Common myeloid progenitor, CD34-positive (primary cell): ENCODE measurements at regions of chr3 and their contacts with region 1.

Region 1: DNA sequence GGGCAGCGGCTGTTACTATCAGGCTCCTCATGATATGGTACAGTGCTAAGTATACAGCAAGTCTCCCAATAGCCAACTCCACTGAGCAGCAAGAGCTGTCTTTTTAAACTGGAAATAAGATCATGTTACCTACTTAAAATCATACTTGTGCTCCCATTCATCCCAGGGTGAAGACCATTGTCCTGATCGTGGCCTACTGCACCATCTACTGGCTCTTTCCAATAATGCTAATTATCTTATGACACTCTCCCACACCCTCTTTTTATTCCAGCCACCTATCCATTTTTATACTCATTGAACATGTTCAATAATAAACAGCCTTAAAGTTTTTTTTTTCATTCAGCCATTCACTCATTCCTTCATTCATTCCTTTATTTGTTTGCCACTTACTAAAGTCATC is 117.7 kb downstream of the GBE1 start:
- DNase-seq: peak; percentile 46 to 72 (median 66)
- H3K4me3 ChIP-seq: no peak overlapping the region
- H3K27ac ChIP-seq: no peak overlapping the region
- H3K4me1 ChIP-seq: no peaks in the 10 kb centered on the region
- H3K27me3 ChIP-seq: no peaks in the 10 kb centered on the region

Region 2: DNA sequence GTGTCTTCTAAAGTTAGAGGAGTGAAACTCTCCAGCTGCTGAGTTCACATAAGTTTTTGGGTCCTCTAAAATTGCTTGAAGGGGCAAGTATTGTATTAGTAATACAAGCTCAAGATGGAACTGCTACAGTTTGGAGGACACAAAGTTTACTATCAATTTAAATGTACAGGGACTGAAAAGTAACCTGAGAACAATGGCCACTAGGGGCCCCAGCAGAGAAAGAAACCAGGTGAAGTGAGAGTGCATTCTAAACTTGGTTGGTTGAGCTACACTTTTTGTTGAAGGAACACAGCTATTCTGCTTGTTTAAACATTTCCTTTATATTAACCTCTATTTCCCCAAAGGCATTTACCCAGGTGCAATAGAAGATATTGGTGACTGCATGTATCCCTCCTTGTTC is 637.7 kb before region 1 on chr3:
- CTCF ChIA-PET with region 1: no interaction called
- POLR2A ChIA-PET with region 1: no interaction called
- DNase-seq: no peak
- H3K4me3 ChIP-seq: no peak overlapping the region
- H3K27ac ChIP-seq: no peak overlapping the region
- H3K4me1 ChIP-seq: no peaks in the 10 kb centered on the region
- H3K27me3 ChIP-seq: no peaks in the 10 kb centered on the region

Region 3: GRCh38 chr3:81419228-81419627 is 224.5 kb before region 1 on chr3:
- CTCF ChIA-PET with region 1: interaction called, 21 read pairs
- POLR2A ChIA-PET with region 1: no interaction called
- DNase-seq: peak; percentile 8 to 32 (median 23)
- H3K4me3 ChIP-seq: no peak overlapping the region
- H3K27ac ChIP-seq: no peak overlapping the region
- H3K4me1 ChIP-seq: no peaks in the 10 kb centered on the region
- H3K27me3 ChIP-seq: no peaks in the 10 kb centered on the region

Region 4: GRCh38 chr3:81490541-81491288 is 153.0 kb before region 1 on chr3:
- CTCF ChIA-PET with region 1: interaction called, 36 read pairs
- POLR2A ChIA-PET with region 1: no interaction called
- DNase-seq: peak; percentile 87 to 93 (median 89)
- H3K4me3 ChIP-seq: no peak overlapping the region
- H3K27ac ChIP-seq: no peak overlapping the region
- H3K4me1 ChIP-seq: peaks cover 0 to 2% (median under 1%) of the 10 kb centered on the region in 4 experiments
- H3K27me3 ChIP-seq: no peaks in the 10 kb centered on the region

Region 5: GRCh38 chr3:81581966-81582599 is 61.6 kb before region 1 on chr3:
- CTCF ChIA-PET with region 1: interaction called, 37 read pairs
- POLR2A ChIA-PET with region 1: no interaction called
- DNase-seq: peak; percentile 43 to 64 (median 58)
- H3K4me3 ChIP-seq: no peak overlapping the region
- H3K27ac ChIP-seq: no peak overlapping the region
- H3K4me1 ChIP-seq: peaks cover 0 to 8% (median 5%) of the 10 kb centered on the region in 4 experiments
- H3K27me3 ChIP-seq: no peaks in the 10 kb centered on the region

Region 6: GRCh38 chr3:81658322-81658997 is 14.7 kb after region 1 on chr3:
- CTCF ChIA-PET with region 1: interaction called, 13 read pairs
- POLR2A ChIA-PET with region 1: no interaction called
- DNase-seq: no peak
- H3K4me3 ChIP-seq: no peak overlapping the region
- H3K27ac ChIP-seq: no peak overlapping the region
- H3K4me1 ChIP-seq: no peaks in the 10 kb centered on the region
- H3K27me3 ChIP-seq: no peaks in the 10 kb centered on the region

Region 7: DNA sequence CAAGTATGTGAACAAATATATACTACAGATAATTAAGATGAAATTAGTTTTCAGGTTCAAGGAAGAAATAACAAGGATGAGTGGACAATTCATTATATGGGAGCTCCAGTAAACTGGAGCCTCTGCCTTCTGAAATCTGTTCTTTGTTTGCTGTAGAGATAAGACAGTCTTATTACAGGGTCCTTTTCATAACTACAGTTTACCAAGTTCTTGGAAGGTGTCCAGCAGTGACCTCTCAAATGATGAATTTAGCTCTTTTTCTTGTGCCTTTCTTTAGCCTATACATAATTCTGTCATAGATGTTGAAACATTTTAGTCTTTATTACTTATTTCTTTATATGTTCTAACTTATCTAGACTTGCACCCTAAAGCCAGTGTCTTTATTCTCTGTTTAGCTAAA is 207.5 kb after region 1 on chr3:
- CTCF ChIA-PET with region 1: no interaction called
- POLR2A ChIA-PET with region 1: no interaction called
- DNase-seq: no peak
- H3K4me3 ChIP-seq: no peak overlapping the region
- H3K27ac ChIP-seq: no peak overlapping the region
- H3K4me1 ChIP-seq: no peaks in the 10 kb centered on the region
- H3K27me3 ChIP-seq: no peaks in the 10 kb centered on the region